Ascending aorta (tissue), 2 donors: ENCODE measurements at regions of chr7 and their contacts with region 1.

Region 1: DNA sequence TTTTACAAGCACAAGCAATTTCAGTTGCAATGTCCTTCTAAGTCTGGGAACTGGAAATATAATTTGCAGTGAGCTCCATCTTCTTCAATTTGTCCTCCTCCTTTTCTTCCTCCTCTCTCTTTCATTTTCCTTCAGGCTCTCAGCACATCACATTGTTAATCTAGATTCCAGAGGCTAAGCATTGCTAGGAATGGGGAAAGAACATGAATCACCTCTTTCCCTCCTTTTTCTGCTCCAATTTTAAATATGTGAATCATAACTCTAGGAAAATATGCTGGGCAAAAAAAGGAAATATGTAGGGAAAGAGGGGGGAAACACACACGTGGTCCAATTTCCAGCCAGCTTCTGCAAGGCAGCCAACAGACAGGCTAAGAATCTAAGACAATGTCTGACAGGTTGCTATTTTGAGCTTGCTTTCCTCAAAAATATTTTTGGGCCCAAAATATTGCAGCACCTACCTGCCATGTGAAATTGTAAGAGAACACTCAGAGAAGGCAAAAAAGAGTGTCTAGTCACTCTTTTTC is 72.7 kb upstream of the NUPR2 start:
- DNase-seq: peak in 1 of 2 donors; percentile 74
- H3K4me3 ChIP-seq: no peak overlapping the region
- H3K27ac ChIP-seq: peak overlapping the region; percentile 76 to 78
- H3K4me1 ChIP-seq: peaks cover 4 to 17% of the 10 kb centered on the region in 2 donors
- H3K27me3 ChIP-seq: no peaks in the 10 kb centered on the region
- CTCF ChIP-seq: no peak

Region 2: GRCh38 chr7:56092789-56093531 is 95.9 kb before region 1 on chr7 and contains the start of gene PHKG1:
- intact Hi-C with region 1: loop called (anchors 5 kb)
- DNase-seq: peak in 1 of 2 donors; percentile 91
- H3K4me3 ChIP-seq: peak within 1 kb of the TSS; percentile 13 to 37
- H3K27ac ChIP-seq: peak within 1 kb of the TSS; percentile 77 to 86
- H3K4me1 ChIP-seq: peaks cover 3 to 14% of the 10 kb centered on the region in 2 donors
- H3K27me3 ChIP-seq: no peaks in the 10 kb centered on the region
- CTCF ChIP-seq: peak; percentile 6 to 75 (median 67)
- total RNA-seq, gene PHKG1: 1.1 TPM

Region 3: GRCh38 chr7:56157238-56157790 is 31.6 kb before region 1 on chr7:
- intact Hi-C with region 1: no loop called
- DNase-seq: no peak
- H3K4me3 ChIP-seq: no peak overlapping the region
- H3K27ac ChIP-seq: no peak overlapping the region
- H3K4me1 ChIP-seq: no peaks in the 10 kb centered on the region
- H3K27me3 ChIP-seq: no peaks in the 10 kb centered on the region
- CTCF ChIP-seq: no peak